ENCODE measurements at regions of chr11 and their contacts with region 1.

Region 1: GRCh38 chr11:67082035-67082791 is 25.6 kb downstream of the RHOD start:
- DNase-seq: no peak
- ATAC-seq: peak; percentile 21
- H3K4me3 ChIP-seq: peak overlapping the region in 2 of 3 experiments; percentile 36 to 55; a peak in 5 of 6 replicates
- H3K27ac ChIP-seq: no peak overlapping the region
- H3K4me1 ChIP-seq: peaks cover 31% of the 10 kb centered on the region
- H3K27me3 ChIP-seq: peaks cover 1 to 15% of the 10 kb centered on the region in 2 experiments; a peak in 4 of 5 replicates
- CTCF ChIP-seq: peak; percentile 50
- EP300 ChIP-seq: no peak
- POLR2A ChIP-seq: no peak
- RAD21 ChIP-seq: no peak

Region 2: DNA sequence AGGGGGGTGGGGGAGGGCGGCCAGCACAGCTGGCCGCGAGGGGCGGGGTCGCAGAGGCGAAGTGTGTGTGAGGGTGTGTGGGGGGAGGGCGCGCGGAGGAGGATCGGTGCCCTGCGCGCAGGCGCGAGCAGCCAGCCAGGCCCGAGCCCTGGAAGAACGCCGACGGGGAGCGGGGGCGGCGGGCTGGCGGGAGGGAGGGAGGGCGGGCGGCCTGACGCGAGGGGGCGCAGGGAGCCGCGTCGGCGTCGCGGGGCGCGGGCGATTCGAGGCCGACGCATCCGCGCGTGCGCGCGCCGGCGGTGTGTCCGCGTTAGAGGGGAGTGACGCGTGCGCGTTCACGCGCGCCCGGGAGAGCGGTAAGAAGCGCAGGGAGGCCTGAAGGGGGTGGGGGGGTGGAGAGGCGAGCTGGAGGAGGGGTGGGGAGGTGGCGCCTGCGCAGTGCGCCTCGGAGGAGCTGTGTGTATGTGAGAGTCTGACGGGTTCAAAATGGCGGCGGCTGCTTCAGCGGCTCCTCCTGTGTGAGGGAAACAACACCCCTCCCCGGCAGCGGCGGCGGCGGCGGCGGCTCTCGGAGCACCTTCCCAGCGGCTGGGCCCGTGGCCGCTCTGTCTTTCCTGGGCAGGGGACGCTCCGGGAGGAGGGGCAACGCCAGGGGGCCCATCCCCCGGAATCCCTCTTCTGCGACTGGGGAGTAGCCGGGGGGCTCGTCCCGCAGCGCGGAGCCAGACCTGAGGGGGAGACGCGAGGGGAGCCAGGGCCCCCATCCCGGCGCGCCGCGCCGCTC is 36.8 kb after region 1 on chr11 and contains the start of gene KDM2A:
- CTCF ChIA-PET with region 1: no interaction called
- POLR2A ChIA-PET with region 1: interaction called, 4 read pairs
- in situ Hi-C with region 1: no loop called
- intact Hi-C with region 1: loop called (anchors 5 kb)
- DNase-seq: peak; percentile 93
- ATAC-seq: peak; percentile 83
- H3K4me3 ChIP-seq: peak within 1 kb of the TSS; percentile 82 to 100 (median 86)
- H3K27ac ChIP-seq: peak within 1 kb of the TSS; percentile 76
- H3K4me1 ChIP-seq: peaks cover 56% of the 10 kb centered on the region
- H3K27me3 ChIP-seq: no peaks in the 10 kb centered on the region
- CTCF ChIP-seq: peak; percentile 47; the same call in 1 of the 2 replicates
- EP300 ChIP-seq: no peak
- POLR2A ChIP-seq: peak; percentile 49 to 82; a peak in 3 of 4 replicates
- RAD21 ChIP-seq: no peak
- total RNA-seq, gene KDM2A: 21.0 and 31.4 TPM in 2 replicates

Region 3: GRCh38 chr11:67167086-67167485 is 84.9 kb after region 1 on chr11:
- CTCF ChIA-PET with region 1: interaction called, 17 read pairs
- POLR2A ChIA-PET with region 1: no interaction called
- in situ Hi-C with region 1: loop called (anchors 10 kb)
- intact Hi-C with region 1: no loop called
- DNase-seq: no peak
- ATAC-seq: no peak
- H3K4me3 ChIP-seq: no peak overlapping the region
- H3K27ac ChIP-seq: no peak overlapping the region
- H3K4me1 ChIP-seq: peaks cover 21% of the 10 kb centered on the region
- H3K27me3 ChIP-seq: no peaks in the 10 kb centered on the region
- CTCF ChIP-seq: no peak
- EP300 ChIP-seq: no peak
- POLR2A ChIP-seq: no peak
- RAD21 ChIP-seq: no peak

Region 4: GRCh38 chr11:67178878-67179277 is 96.7 kb after region 1 on chr11:
- CTCF ChIA-PET with region 1: no interaction called
- POLR2A ChIA-PET with region 1: no interaction called
- in situ Hi-C with region 1: loop called (anchors 10 kb)
- intact Hi-C with region 1: no loop called
- DNase-seq: no peak
- ATAC-seq: no peak
- H3K4me3 ChIP-seq: no peak overlapping the region
- H3K27ac ChIP-seq: no peak overlapping the region
- H3K4me1 ChIP-seq: no peaks in the 10 kb centered on the region
- H3K27me3 ChIP-seq: no peaks in the 10 kb centered on the region
- CTCF ChIP-seq: no peak
- EP300 ChIP-seq: no peak
- POLR2A ChIP-seq: no peak
- RAD21 ChIP-seq: no peak

Measured in HepG2 (cell line).